Adrenal gland (tissue), 19 donors: ENCODE measurements at regions of chr14 and their contacts with region 1.

Region 1: DNA sequence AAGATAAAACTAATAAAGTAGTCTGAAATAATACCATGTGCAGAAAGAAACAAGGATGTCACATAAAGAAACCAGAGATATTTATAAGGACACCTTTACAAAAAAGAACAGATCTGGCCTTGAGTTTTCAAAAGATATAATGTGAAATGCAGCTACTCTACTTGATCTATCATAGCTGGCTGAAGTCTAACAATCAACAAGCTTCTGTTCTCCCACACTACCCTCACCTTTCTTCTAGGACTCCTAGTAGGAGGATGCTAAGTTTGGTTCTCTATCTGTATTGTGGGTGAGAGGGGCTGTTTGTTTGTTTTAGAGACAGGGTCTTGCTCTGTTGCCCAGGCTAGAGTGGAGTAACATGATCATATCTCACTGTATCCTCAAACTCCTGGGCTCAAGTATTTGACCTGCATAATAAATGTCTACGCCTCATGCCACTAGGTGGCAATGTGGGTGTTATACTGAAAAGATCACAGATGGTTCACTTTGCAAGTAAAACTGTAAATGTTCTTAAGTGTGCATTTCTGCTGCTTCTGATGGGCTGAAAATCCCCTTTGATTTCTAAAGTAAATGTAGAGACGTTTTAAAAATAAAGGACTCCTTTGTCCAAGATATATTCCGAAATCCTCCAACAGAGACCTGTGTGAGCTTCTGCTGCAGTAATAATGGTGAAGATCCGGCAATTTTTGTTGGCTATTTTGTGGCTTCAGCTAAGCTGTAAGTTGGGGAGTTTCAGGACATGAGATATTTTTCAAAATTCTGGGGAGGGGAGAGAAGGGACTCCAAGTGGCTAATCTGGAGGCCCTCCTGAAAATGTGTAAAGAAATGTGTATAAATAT is 269.3 kb downstream of the DAD1 start:
- DNase-seq: peak; percentile 55 to 85 (median 69)
- H3K4me3 ChIP-seq: no peak overlapping the region
- H3K27ac ChIP-seq: no peak overlapping the region
- H3K4me1 ChIP-seq: no peaks in the 10 kb centered on the region
- H3K27me3 ChIP-seq: peaks cover 5% of the 10 kb centered on the region
- CTCF ChIP-seq: peak; percentile 60 to 74 (median 70)
- POLR2A ChIP-seq: no peak

Region 2: GRCh38 chr14:22370084-22370847 is 50.5 kb after region 1 on chr14:
- intact Hi-C with region 1: loop called (anchors 5 kb)
- DNase-seq: peak; percentile 68 to 84 (median 77)
- H3K4me3 ChIP-seq: no peak overlapping the region
- H3K27ac ChIP-seq: peak overlapping the region in 2 of 5 donors; percentile 26 to 37
- H3K4me1 ChIP-seq: peaks cover 0 to 4% of the 10 kb centered on the region in 2 donors
- H3K27me3 ChIP-seq: no peaks in the 10 kb centered on the region
- CTCF ChIP-seq: no peak
- POLR2A ChIP-seq: no peak

Region 3: GRCh38 chr14:22375321-22375930 is 55.7 kb after region 1 on chr14:
- intact Hi-C with region 1: loop called (anchors 5 kb)
- DNase-seq: peak in 2 of 7 donors; percentile 38 to 44
- H3K4me3 ChIP-seq: no peak overlapping the region
- H3K27ac ChIP-seq: no peak overlapping the region
- H3K4me1 ChIP-seq: peaks cover 0 to 2% of the 10 kb centered on the region in 2 donors
- H3K27me3 ChIP-seq: no peaks in the 10 kb centered on the region
- CTCF ChIP-seq: peak; percentile 19 to 70 (median 62)
- POLR2A ChIP-seq: no peak